Caco-2 (cell line): ENCODE measurements at regions of chr22 and their contacts with region 1.

Region 1: DNA sequence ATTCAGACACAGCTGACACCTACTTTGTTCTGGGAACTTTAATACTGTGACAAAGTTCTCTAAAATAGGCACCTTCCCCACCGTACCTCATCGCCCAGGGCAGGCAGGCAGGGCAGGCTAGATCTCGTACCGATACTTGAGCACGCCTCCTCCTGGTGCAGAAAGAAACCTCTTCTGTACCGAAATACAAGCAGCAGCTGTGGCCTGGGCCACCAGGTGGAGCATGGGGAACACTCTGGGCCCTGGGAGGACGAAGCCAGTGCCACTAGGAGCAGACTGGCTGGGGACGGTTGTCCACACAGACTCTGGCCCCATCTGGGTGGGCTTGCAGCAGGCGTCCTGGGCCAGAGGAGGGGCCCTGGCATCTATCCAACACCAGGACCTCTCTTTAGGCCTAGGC is 12.8 kb downstream of the PMM1 start:
- DNase-seq: peak; percentile 74 to 78
- H3K4me3 ChIP-seq: no peak overlapping the region
- H3K4me3 Mint-ChIP-seq: no peak overlapping the region
- H3K27ac Mint-ChIP-seq: no peak overlapping the region
- H3K4me1 ChIP-seq: no peaks in the 10 kb centered on the region
- H3K4me1 Mint-ChIP-seq: no peaks in the 10 kb centered on the region
- H3K27me3 ChIP-seq: no peaks in the 10 kb centered on the region
- H3K27me3 Mint-ChIP-seq: no peaks in the 10 kb centered on the region
- CTCF ChIP-seq: peak; percentile 64 to 90

Region 2: DNA sequence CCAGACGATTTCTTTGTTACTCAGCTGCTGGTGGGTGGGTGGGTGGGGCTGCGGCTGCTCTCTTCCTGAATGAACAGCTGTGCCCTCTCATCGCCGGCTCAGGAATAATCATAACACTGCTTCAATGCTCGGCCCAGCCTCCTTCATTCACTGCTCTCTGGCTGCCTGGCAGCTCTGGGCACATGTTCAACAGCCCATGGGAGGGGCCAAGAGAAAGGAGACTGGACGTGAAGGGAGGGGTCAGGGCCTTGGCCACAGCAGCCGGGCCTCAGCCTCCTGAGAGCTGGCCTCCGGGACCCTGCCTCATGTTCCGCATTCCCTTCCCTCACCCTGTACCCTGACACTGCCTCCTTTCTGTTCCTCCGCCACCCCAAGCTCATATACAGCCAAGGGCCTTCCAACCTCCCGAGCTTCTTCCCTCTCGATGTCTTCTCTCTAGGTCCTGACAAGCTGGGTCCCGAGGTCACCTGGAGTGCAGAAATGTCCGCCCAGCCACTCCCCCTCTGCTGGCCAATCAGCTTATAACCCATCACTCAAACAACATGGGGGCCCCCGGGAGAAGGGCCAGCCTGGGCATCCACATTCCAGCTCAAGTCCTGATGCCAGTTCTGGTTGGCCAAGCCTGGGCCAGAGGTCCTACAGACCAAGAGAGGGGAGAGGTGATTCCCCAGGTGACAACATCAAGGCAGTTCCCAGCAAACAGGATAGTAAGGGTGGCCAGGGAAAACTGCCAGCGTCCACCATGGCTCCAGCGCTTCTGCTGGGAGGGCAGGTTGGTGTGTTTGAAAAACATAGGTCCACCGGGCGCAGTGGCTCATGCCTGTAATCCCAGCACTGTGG is 19.3 kb before region 1 on chr22:
- CTCF ChIA-PET with region 1: no interaction called
- POLR2A ChIA-PET with region 1: no interaction called
- intact Hi-C with region 1: no loop called
- DNase-seq: no peak
- H3K4me3 ChIP-seq: no peak overlapping the region
- H3K4me3 Mint-ChIP-seq: no peak overlapping the region
- H3K27ac Mint-ChIP-seq: no peak overlapping the region
- H3K4me1 ChIP-seq: peaks cover 6% of the 10 kb centered on the region; the same call in 1 of the 2 replicates
- H3K4me1 Mint-ChIP-seq: peaks cover 11% of the 10 kb centered on the region
- H3K27me3 ChIP-seq: no peaks in the 10 kb centered on the region
- H3K27me3 Mint-ChIP-seq: no peaks in the 10 kb centered on the region
- CTCF ChIP-seq: no peak

Region 3: GRCh38 chr22:41596776-41597634 is 20.1 kb after region 1 on chr22:
- CTCF ChIA-PET with region 1: interaction called, 11 read pairs
- POLR2A ChIA-PET with region 1: no interaction called
- intact Hi-C with region 1: loop called (anchors 1 kb)
- DNase-seq: peak in 1 of 2 experiments; percentile 64
- H3K4me3 ChIP-seq: no peak overlapping the region
- H3K4me3 Mint-ChIP-seq: no peak overlapping the region
- H3K27ac Mint-ChIP-seq: no peak overlapping the region
- H3K4me1 ChIP-seq: no peaks in the 10 kb centered on the region
- H3K4me1 Mint-ChIP-seq: peaks cover 6% of the 10 kb centered on the region
- H3K27me3 ChIP-seq: no peaks in the 10 kb centered on the region
- H3K27me3 Mint-ChIP-seq: no peaks in the 10 kb centered on the region
- CTCF ChIP-seq: peak in 1 of 2 experiments; percentile 73

Region 4: DNA sequence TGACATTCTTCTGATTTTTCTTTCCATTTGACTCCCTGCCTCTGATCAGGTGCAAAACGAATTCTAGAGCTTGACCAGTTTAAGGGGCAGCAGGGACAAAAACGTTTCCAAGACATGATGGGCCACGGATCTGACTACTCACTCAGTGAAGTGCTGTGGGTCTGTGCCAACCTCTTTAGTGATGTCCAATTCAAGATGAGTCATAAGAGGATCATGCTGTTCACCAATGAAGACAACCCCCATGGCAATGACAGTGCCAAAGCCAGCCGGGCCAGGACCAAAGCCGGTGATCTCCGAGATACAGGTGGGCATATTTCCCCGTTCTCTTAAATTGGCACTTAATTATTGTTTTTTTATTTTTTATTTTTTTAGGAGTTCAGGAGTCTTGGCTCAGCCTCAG is 59.6 kb after region 1 on chr22:
- CTCF ChIA-PET with region 1: no interaction called
- POLR2A ChIA-PET with region 1: no interaction called
- intact Hi-C with region 1: no loop called
- DNase-seq: no peak
- H3K4me3 ChIP-seq: no peak overlapping the region
- H3K4me3 Mint-ChIP-seq: no peak overlapping the region
- H3K27ac Mint-ChIP-seq: no peak overlapping the region
- H3K4me1 ChIP-seq: no peaks in the 10 kb centered on the region
- H3K4me1 Mint-ChIP-seq: no peaks in the 10 kb centered on the region
- H3K27me3 ChIP-seq: no peaks in the 10 kb centered on the region
- H3K27me3 Mint-ChIP-seq: no peaks in the 10 kb centered on the region
- CTCF ChIP-seq: no peak